ENCODE measurements at regions of chr10 and their contacts with region 1.

Region 1: DNA sequence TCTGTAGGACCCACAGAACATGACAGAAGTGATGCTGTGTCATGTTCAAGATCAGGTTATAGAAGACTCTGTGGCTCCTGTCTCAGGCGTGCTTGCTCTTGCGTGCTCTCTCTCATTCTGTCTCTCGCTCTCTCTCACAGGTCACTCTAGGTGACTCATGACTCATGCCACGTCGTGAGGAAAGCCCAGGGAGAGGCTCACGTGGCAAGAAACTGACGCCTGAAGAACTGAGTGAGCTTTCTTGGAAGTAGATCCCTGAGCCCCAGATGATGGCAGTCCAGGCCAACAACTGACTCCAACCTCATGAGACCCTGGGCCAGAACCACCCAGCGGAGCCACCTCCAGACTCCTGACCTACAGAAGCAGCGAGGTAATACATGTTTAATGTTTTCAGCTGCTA is 103.3 kb downstream of the DNMBP start:
- DNase-seq: no peak
- H3K4me3 ChIP-seq: no peak overlapping the region
- H3K27ac ChIP-seq: no peak overlapping the region
- H3K4me1 ChIP-seq: no peaks in the 10 kb centered on the region
- H3K27me3 ChIP-seq: no peaks in the 10 kb centered on the region
- CTCF ChIP-seq: no peak
- EP300 ChIP-seq: no peak
- POLR2A ChIP-seq: no peak
- RAD21 ChIP-seq: no peak

Region 2: GRCh38 chr10:99732033-99732912 is 174.2 kb before region 1 on chr10 and contains the starts of genes COX15 and CUTC:
- CTCF ChIA-PET with region 1: no interaction called
- POLR2A ChIA-PET with region 1: no interaction called
- DNase-seq: peak; percentile 86 to 97
- H3K4me3 ChIP-seq: peak within 1 kb of the TSS; percentile 91 to 97 (median 93)
- H3K27ac ChIP-seq: peak within 1 kb of the TSS; percentile 85
- H3K4me1 ChIP-seq: no peaks in the 10 kb centered on the region
- H3K27me3 ChIP-seq: no peaks in the 10 kb centered on the region
- CTCF ChIP-seq: peak; percentile 42 to 60 (median 47); a peak in 3 of 4 replicates
- EP300 ChIP-seq: no peak
- POLR2A ChIP-seq: peak; percentile 86 to 93
- RAD21 ChIP-seq: peak; percentile 10 to 27; a peak in 2 of 4 replicates
- total RNA-seq, gene COX15: 35.9 and 36.6 TPM in 2 replicates
- total RNA-seq, gene CUTC: 25.6 and 27.2 TPM in 2 replicates

Region 3: DNA sequence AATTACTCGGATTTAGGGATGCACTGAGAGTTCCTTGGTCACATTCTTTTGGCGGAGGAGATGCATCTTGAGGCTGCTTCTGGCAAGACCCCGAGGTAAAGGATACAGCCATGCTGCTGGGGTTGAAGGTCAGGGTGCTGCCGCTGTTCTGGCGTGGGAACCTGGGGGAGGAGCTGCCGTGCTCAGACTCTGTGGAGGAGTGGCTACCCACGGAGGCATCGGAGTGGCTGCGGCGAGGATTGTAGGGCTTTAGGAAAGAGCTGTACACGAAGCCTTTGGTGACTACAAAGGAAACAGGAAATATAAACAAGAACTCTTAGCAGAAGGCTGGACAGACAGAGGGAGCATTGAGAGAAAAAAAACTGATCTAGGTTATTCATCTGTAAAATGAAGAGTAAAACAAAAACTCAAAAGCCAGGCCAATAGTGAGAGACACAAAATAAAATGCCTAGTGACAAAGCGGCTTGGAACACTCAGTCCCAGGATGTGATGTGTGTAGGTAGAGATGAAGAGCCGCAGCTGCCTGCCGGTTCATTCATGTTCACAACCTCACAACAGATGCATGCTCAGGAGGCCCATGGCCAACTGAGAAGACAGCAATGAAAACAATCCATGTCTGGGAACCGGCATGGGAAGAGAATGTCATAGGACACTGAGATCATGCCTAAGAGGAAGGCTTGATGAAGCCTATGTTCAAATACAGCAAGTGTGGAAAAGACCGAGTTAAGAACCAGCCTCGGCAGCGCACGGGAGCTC is 26.2 kb before region 1 on chr10:
- CTCF ChIA-PET with region 1: no interaction called
- POLR2A ChIA-PET with region 1: interaction called, 27 read pairs
- DNase-seq: no peak
- H3K4me3 ChIP-seq: no peak overlapping the region
- H3K27ac ChIP-seq: no peak overlapping the region
- H3K4me1 ChIP-seq: no peaks in the 10 kb centered on the region
- H3K27me3 ChIP-seq: no peaks in the 10 kb centered on the region
- CTCF ChIP-seq: no peak
- EP300 ChIP-seq: no peak
- POLR2A ChIP-seq: no peak
- RAD21 ChIP-seq: no peak

Region 4: GRCh38 chr10:99888622-99889021 is 17.8 kb before region 1 on chr10:
- CTCF ChIA-PET with region 1: interaction called, 6 read pairs
- POLR2A ChIA-PET with region 1: interaction called, 49 read pairs
- DNase-seq: no peak
- H3K4me3 ChIP-seq: no peak overlapping the region
- H3K27ac ChIP-seq: no peak overlapping the region
- H3K4me1 ChIP-seq: no peaks in the 10 kb centered on the region
- H3K27me3 ChIP-seq: no peaks in the 10 kb centered on the region
- CTCF ChIP-seq: no peak
- EP300 ChIP-seq: no peak
- POLR2A ChIP-seq: no peak
- RAD21 ChIP-seq: no peak

Region 5: GRCh38 chr10:99895867-99896266 is 10.6 kb before region 1 on chr10:
- CTCF ChIA-PET with region 1: interaction called, 7 read pairs
- POLR2A ChIA-PET with region 1: interaction called, 49 read pairs
- DNase-seq: no peak
- H3K4me3 ChIP-seq: no peak overlapping the region
- H3K27ac ChIP-seq: no peak overlapping the region
- H3K4me1 ChIP-seq: no peaks in the 10 kb centered on the region
- H3K27me3 ChIP-seq: no peaks in the 10 kb centered on the region
- CTCF ChIP-seq: no peak
- EP300 ChIP-seq: no peak
- POLR2A ChIP-seq: no peak
- RAD21 ChIP-seq: no peak

Region 6: DNA sequence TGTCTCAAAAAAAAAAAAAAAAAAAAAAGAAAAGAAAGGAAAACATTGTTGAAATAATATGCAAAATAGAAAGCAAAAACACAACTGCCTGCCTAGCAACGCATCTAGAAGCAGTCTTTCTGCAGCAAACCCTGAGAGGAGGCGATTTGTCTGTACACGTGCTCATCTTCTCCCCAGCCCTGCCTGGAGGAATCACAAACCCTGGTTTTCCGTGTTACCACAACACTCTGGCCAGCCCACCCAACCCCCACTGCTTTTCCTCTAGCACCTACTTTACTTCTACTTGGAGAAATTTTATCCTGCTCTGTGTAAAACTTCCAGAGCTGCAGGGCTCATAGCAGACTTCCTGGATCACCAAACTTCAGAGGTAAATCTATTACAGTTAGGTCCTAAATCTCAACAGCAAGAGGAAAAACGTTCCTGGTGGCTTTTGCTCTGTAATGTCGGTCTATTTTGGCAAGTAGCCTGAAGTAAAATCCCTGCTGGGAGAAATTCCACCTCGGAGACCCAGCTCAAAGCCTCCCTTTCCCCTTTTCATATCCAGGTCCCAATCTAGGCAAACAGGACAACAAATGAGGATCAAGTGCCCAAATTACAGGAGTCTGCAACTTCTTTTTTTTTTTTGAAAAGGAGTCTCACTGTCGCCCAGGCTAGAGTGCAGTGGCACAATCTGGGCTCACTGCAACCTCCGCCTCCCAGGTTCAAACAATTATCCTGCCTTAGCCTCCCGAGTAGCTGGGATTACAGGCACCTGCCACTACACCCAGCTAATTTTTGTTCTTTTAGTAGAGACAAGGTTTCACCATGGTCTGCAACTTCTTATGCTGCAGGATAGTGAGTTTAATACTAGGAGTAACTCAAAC is 11.7 kb after region 1 on chr10:
- CTCF ChIA-PET with region 1: interaction called, 10 read pairs
- POLR2A ChIA-PET with region 1: interaction called, 17 read pairs
- DNase-seq: peak; percentile 34 to 75
- H3K4me3 ChIP-seq: peak overlapping the region; percentile 45 to 67 (median 50)
- H3K27ac ChIP-seq: peak overlapping the region; percentile 94
- H3K4me1 ChIP-seq: peaks cover 4 to 12% (median 9%) of the 10 kb centered on the region in 4 experiments; a peak in 6 of 7 replicates
- H3K27me3 ChIP-seq: no peaks in the 10 kb centered on the region
- CTCF ChIP-seq: no peak
- EP300 ChIP-seq: peak in 1 of 2 experiments; percentile 56; a peak in 1 of 3 replicates
- POLR2A ChIP-seq: peak in 1 of 2 experiments; percentile 76; a peak in 1 of 3 replicates
- RAD21 ChIP-seq: 0 out of 4 replicates have a peak, but pooled peaks of 1 of the 2 experiments have one; percentile 13

Measured in H1 (cell line).